ENCODE measurements at regions of chr6 and their contacts with region 1.

Region 1: DNA sequence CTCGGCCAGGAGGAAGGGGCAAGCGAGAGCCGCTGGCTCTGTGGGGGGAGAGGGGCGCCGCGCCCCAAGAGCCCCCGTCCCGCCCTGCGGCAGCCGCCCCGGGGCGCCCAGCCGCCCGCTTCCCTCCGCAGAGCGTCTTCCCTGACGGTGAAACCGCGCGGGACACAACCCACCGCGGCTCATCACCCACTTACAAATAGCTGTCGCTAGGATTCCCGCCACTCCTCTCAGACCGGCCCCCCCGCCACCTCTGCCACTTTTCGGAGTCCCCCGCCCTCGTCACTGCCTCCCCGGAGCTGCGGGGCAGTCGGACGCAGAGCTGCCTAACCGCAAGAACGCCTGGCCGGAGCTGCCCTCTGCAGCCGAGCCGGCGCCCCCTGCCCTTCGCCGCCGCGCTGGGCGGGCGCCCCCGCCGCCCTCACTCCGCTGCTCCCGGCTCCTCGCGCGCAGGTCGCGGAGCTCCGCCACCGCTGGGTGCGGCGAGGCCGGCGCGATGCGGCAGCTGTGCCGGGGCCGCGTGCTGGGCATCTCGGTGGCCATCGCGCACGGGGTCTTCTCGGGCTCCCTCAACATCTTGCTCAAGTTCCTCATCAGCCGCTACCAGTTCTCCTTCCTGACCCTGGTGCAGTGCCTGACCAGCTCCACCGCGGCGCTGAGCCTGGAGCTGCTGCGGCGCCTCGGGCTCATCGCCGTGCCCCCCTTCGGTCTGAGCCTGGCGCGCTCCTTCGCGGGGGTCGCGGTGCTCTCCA is at the start of gene SLC35D3:
- DNase-seq: peak; percentile 43
- ATAC-seq: peak; percentile 46
- H3K4me3 Mint-ChIP-seq: peak within 1 kb of the TSS; percentile 77
- H3K27ac Mint-ChIP-seq: no peak within 1 kb of the TSS
- H3K4me1 Mint-ChIP-seq: peaks cover 20% of the 10 kb centered on the region
- H3K27me3 Mint-ChIP-seq: peaks cover 73% of the 10 kb centered on the region
- CTCF ChIP-seq: no peak
- total RNA-seq, gene SLC35D3: 0.37 to 0.78 TPM (median 0.39 TPM) in 3 replicates

Region 2: GRCh38 chr6:136607932-136608772 is 314.0 kb before region 1 on chr6:
- CTCF ChIA-PET with region 1: no interaction called
- POLR2A ChIA-PET with region 1: no interaction called
- DNase-seq: peak; percentile 93
- ATAC-seq: peak; percentile 91
- H3K4me3 Mint-ChIP-seq: no peak overlapping the region
- H3K27ac Mint-ChIP-seq: no peak overlapping the region
- H3K4me1 Mint-ChIP-seq: peaks cover 45% of the 10 kb centered on the region
- H3K27me3 Mint-ChIP-seq: no peaks in the 10 kb centered on the region
- CTCF ChIP-seq: peak; percentile 85

Region 3: DNA sequence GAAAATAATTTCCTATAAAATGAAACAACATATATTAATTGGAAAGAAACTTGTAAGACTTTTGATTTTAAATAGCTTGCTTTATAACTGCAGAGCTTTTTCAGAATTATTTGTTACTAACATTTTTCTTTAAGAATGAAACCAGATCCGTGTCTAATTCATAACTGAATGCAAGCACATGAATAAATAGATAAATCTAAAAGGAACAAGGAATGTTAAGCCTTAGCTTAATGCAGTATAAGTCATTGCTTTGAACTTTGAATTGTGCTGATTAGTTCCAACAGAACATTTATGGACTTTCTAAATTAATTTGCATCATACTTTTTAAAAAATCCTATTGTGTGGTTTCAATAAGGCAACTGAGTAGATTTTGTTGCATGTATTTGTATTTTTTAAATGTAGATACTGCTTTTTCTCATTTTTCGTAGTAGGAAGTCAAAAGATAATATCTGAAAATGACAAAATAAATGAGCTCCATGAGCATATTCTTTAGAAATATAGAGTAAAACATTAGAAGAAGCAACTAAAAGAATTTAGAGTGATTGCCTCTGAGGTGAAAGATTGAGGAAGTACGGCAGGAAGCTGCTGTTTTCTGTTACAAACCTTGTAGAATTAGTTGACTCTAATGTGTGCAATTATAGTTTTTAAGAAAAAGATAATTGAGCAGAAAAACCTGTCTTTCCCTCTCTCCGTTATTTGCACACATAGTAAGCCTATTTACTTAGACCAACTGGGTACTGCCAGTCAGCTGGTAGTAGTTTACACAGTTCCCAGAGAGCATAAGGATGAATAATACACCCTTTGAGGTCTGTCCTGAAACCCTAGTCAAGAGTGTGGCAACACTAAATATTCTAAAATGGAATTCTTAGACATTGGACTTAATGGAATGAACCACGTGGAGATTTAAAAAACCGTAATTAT is 32.6 kb before region 1 on chr6:
- CTCF ChIA-PET with region 1: no interaction called
- POLR2A ChIA-PET with region 1: no interaction called
- DNase-seq: no peak
- ATAC-seq: no peak
- H3K4me3 Mint-ChIP-seq: no peak overlapping the region
- H3K27ac Mint-ChIP-seq: no peak overlapping the region
- H3K4me1 Mint-ChIP-seq: no peaks in the 10 kb centered on the region
- H3K27me3 Mint-ChIP-seq: no peaks in the 10 kb centered on the region
- CTCF ChIP-seq: no peak

Region 4: GRCh38 chr6:136956590-136957544 is 34.8 kb after region 1 on chr6:
- CTCF ChIA-PET with region 1: interaction called, 16 read pairs
- POLR2A ChIA-PET with region 1: interaction called, 4 read pairs
- DNase-seq: peak; percentile 66
- ATAC-seq: peak; percentile 70
- H3K4me3 Mint-ChIP-seq: peak overlapping the region; percentile 38
- H3K27ac Mint-ChIP-seq: peak overlapping the region; percentile 99
- H3K4me1 Mint-ChIP-seq: peaks cover 72% of the 10 kb centered on the region
- H3K27me3 Mint-ChIP-seq: no peaks in the 10 kb centered on the region
- CTCF ChIP-seq: no peak

Region 5: DNA sequence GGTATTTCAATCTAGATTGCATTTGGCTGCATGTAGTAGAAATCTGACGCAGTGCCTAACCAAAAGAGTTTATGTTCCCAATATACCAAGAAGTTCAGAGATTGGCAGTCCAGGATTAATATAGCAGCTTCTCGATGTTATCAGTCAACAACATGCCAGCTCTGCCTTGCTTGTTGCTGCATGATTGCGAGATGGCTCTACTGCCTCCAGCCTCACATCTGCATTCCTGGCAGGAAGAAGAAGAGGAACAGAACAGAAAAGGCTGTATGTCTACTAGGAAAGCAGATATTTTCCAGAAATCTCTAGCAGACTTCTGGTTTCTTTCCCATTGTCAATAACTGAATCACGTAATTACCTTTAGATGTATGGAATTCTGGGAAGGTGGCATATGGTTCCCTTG is 60.8 kb after region 1 on chr6:
- CTCF ChIA-PET with region 1: no interaction called
- POLR2A ChIA-PET with region 1: no interaction called
- DNase-seq: no peak
- ATAC-seq: no peak
- H3K4me3 Mint-ChIP-seq: no peak overlapping the region
- H3K27ac Mint-ChIP-seq: no peak overlapping the region
- H3K4me1 Mint-ChIP-seq: peaks cover 26% of the 10 kb centered on the region
- H3K27me3 Mint-ChIP-seq: peaks cover 10% of the 10 kb centered on the region
- CTCF ChIP-seq: no peak

Measured in WTC11 (cell line).